ENCODE measurements at regions of chr11 and their contacts with region 1.

Region 1: DNA sequence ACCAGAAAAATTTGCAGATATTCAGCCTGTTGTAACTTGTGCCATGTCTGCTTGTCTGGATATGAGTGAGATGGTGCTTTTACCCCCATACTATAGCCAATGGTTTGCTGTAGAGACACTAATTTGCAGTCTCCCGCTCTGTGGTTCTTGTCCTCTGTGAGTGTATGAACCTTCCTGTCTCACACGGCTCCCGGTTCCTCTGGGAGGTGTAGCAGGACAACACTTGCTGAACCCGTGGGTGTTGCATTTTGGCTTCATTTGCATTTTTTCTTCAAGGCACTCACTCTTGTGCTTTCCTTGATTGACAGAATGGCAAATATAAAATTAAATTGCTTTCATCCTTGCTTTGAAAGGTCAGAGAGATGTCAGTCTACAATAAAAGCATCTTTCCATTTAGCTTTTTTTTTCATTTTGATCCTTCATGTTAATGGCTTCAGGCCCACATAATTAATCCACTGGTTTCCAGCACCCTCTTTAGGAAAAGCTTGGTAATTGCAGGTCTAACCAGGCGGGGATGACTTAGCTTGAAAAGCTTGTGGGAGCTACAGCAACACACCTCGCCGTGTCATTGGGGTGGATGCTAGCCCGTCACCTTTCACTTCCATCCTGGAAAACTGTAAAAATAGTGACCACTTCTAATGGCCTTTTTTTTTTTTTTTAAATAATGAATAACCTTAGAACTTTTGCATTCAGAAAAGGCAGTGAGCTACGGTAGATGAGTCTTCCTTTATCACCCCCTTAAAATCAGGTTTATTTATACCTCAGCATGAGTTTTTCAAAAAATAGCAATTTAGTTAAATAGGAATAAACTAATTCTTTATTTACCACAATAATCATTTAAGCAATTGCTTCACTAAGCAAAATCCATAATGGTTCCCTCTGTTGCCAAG is 27.4 kb upstream of the ST14 start:
- DNase-seq: no peak
- ATAC-seq: peak; percentile 83
- H3K4me3 ChIP-seq: no peak overlapping the region
- H3K27ac ChIP-seq: no peak overlapping the region
- H3K4me1 ChIP-seq: no peaks in the 10 kb centered on the region
- H3K27me3 ChIP-seq: no peaks in the 10 kb centered on the region

Region 2: DNA sequence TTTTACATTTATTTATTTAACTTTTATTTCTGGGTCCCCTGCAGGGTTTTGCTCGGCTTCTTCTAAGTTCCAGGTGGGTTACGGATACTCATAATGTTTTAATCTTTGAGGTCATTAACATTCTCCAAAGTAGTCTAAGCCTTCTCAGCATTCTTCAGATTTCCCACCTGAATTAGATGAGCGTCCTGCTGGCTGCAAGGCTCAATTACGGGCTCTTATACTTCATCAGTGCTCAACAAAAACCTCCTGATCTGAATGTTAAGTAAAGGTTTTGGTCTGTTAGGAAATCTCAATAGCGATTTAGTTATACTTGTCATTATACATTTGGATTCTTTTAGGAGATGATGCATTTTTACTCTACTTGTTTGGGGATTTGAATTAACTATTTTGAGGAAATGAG is 209.5 kb before region 1 on chr11:
- intact Hi-C with region 1: loop called (anchors 2 kb)
- DNase-seq: no peak
- ATAC-seq: no peak
- H3K4me3 ChIP-seq: no peak overlapping the region
- H3K27ac ChIP-seq: no peak overlapping the region
- H3K4me1 ChIP-seq: no peaks in the 10 kb centered on the region
- H3K27me3 ChIP-seq: no peaks in the 10 kb centered on the region

Region 3: DNA sequence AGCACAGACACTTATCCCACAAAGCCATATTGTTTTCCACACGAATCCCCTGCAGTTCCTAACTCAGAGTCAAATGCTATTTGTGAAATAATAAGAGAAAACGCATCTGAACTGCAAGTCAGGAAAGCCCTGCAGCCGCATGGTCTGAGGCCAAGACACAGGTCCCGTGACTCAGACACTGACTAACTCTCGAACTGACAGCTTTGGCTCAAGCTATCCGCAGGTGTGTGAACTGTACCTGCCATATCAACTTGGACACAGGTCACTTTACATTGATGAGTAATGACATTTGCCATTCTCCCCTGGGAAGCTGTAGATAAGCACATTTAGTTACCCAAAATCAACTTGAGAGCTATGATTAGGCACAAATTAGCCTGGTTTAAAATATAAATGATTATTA is 201.9 kb before region 1 on chr11:
- intact Hi-C with region 1: loop called in 1 of 2 experiments (anchors 2 kb)
- DNase-seq: no peak
- ATAC-seq: no peak
- H3K4me3 ChIP-seq: no peak overlapping the region
- H3K27ac ChIP-seq: no peak overlapping the region
- H3K4me1 ChIP-seq: no peaks in the 10 kb centered on the region
- H3K27me3 ChIP-seq: no peaks in the 10 kb centered on the region